ENCODE measurements at regions of chr21 and their contacts with region 1.

Region 1: DNA sequence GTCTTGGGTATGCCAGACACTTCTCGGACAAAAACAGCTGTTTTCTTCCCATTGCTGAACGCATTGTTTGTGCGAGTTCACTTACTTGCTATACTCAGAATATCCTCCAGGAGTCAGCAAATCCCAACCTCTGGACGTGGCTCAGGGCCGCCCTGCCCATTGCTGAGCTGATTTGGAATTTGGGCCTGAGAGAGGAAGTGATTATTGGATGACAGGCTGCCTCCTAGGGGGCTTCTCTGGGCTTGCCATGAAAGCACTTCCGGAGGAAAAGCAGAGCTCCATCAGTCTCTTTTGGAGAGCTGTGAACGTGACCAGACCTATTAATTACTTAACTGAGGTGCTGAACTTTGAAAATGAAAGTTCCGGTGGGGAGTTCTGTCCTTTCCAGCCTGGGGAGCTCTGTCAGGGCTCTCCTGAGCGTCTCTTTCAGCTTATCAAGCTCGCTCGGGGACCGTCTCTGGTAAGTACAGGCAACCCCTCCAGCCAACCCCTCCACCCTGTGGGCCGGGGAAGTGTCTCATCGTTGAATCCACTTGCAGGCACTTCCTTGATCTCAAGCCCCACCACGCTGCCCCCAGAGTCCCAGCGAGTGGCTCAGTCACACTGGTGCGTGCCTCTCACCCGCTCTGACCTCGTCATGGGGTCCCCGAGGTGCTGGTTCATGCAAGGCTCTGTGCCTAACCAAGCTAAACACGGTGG is 76.9 kb downstream of the CLIC6 start:
- DNase-seq: peak; percentile 68
- H3K4me3 ChIP-seq: no peak overlapping the region
- H3K27ac ChIP-seq: no peak overlapping the region
- H3K4me1 ChIP-seq: peaks cover 5% of the 10 kb centered on the region
- H3K27me3 ChIP-seq: no peaks in the 10 kb centered on the region
- CTCF ChIP-seq: peak; percentile 83

Region 2: GRCh38 chr21:35400233-35400957 is 654.7 kb after region 1 on chr21:
- intact Hi-C with region 1: loop called (anchors 5 kb)
- DNase-seq: peak; percentile 50
- H3K4me3 ChIP-seq: no peak overlapping the region
- H3K27ac ChIP-seq: no peak overlapping the region
- H3K4me1 ChIP-seq: no peaks in the 10 kb centered on the region
- H3K27me3 ChIP-seq: no peaks in the 10 kb centered on the region
- CTCF ChIP-seq: peak; percentile 39

Region 3: GRCh38 chr21:35940074-35940927 is 1194.6 kb after region 1 on chr21:
- intact Hi-C with region 1: loop called (anchors 10 kb)
- DNase-seq: peak; percentile 29
- H3K4me3 ChIP-seq: no peak overlapping the region
- H3K27ac ChIP-seq: no peak overlapping the region
- H3K4me1 ChIP-seq: no peaks in the 10 kb centered on the region
- H3K27me3 ChIP-seq: no peaks in the 10 kb centered on the region
- CTCF ChIP-seq: peak; percentile 62

Measured in colonic mucosa (tissue), 4 donors.